Transverse colon (tissue), 4 donors: ENCODE measurements at regions of chr15 and their contacts with region 1.

Region 1: DNA sequence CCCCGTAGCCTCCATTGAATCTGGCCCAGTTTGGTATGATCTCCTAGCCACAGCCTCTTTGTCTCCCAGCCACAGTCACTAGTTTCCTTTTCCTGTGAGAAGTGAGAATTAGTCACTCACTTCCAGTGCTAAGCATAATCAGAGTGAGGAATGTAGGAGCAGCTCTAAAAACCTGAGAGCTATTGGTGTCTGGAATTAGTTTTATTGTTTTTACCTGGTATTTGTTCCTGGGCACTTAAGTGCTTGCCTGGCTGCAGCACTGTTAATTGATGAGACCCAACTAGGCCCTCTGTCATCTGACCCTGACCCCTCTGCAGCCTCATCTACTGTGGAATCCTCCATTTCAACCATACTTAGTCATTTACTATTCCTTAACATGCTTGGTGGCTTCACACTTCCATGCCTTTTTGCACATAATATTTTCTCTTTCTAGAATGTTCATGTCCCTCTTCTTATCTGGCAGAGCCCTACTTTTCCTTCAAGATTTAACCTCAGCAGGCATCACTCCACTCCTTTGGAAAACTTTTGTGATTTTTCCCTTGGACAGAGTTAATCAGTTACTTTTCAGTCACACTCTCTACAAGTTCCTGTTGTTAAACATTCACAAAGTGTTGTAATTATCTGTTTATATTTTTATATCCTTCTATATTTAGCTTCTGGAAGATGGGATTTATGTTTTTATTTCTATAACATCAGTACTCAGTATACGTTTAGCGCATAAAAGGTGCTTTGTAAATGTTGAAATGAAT is 48.8 kb downstream of the PDE8A start:
- DNase-seq: no peak
- H3K4me3 ChIP-seq: no peak overlapping the region
- H3K27ac ChIP-seq: peak overlapping the region; percentile 71 to 83 (median 81)
- H3K4me1 ChIP-seq: peaks cover 38 to 97% (median 75%) of the 10 kb centered on the region in 4 donors
- H3K27me3 ChIP-seq: no peaks in the 10 kb centered on the region
- CTCF ChIP-seq: no peak
- EP300 ChIP-seq: no peak
- POLR2A ChIP-seq: no peak

Region 2: GRCh38 chr15:84981711-84982300 is 48.7 kb before region 1 on chr15 and contains the start of gene PDE8A:
- in situ Hi-C with region 1: loop called in 1 of 4 experiments (anchors 10 kb)
- intact Hi-C with region 1: no loop called
- DNase-seq: peak; percentile 63
- H3K4me3 ChIP-seq: peak within 1 kb of the TSS; percentile 89 to 96 (median 93)
- H3K27ac ChIP-seq: peak within 1 kb of the TSS; percentile 97 to 98 (median 97)
- H3K4me1 ChIP-seq: peaks cover 3 to 51% (median 36%) of the 10 kb centered on the region in 4 donors
- H3K27me3 ChIP-seq: no peaks in the 10 kb centered on the region
- CTCF ChIP-seq: no peak
- EP300 ChIP-seq: no peak
- POLR2A ChIP-seq: no peak
- total RNA-seq, gene PDE8A: 115 to 188 (median 165) TPM

Region 3: DNA sequence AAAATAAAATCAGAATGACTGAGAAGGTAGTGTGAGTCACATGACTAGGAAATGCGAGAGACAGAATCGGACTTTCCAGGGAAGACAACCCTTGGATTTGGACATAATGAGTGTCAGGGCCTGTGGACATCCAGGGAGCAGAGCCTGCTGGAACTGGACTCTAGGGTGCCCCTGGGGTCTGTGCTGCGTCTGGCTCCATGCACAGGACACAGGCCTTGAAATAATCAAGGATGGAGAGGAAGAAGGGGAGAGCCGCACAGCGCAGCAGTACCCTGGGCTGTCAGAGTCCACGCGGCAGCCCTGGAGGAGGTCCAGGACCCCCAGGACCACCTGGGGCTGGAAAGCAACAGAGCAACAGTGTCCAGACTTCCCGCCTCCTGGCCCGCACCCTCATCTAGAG is 124.9 kb after region 1 on chr15:
- in situ Hi-C with region 1: no loop called
- intact Hi-C with region 1: no loop called
- DNase-seq: no peak
- H3K4me3 ChIP-seq: no peak overlapping the region
- H3K27ac ChIP-seq: no peak overlapping the region
- H3K4me1 ChIP-seq: no peaks in the 10 kb centered on the region
- H3K27me3 ChIP-seq: no peaks in the 10 kb centered on the region
- CTCF ChIP-seq: no peak
- EP300 ChIP-seq: no peak
- POLR2A ChIP-seq: no peak